CD8-positive, alpha-beta T cell (primary cell): ENCODE measurements at regions of chr19 and their contacts with region 1.

Region 1: DNA sequence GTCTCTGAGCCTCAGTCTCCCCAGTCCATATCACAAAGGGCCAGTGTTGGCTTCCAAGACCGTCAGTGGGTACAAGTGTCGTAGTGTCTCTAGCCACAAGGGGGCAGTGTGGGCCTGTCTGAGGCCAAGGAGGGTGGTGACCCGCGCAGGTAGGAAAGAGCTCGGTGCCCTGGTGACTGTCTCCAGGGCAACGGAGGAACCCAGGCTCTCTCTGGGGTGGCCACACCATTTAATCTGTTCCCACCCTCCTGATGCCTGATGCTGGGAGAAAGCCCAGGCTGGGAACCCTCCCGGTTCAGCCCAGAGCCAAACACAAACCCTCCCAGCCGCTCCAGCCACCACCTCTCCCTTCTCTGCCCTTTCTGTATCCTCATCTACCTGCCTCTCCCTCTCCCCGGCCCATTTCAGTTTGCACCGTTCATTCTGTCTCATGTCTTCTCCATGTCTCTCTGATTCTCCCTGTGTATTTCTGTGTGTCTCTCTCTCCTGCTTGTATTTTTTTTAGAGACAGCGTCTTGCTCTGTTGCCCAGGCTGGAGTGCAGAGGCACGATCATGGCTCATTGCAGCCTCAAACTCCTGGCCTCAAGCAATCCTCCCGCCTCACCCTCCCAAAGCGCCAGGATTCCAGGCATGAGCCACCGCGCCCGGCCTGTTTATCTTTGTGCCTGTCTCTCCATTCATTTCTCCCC is 17.5 kb upstream of the MEIS3 start:
- DNase-seq: peak; percentile 66 to 92 (median 85)
- ATAC-seq: peak; percentile 96
- H3K4me3 ChIP-seq: no peak overlapping the region
- H3K4me3 Mint-ChIP-seq: no peak overlapping the region
- H3K27ac ChIP-seq: no peak overlapping the region
- H3K27ac Mint-ChIP-seq: no peak overlapping the region
- H3K4me1 ChIP-seq: no peaks in the 10 kb centered on the region
- H3K4me1 Mint-ChIP-seq: peaks cover 11% of the 10 kb centered on the region
- H3K27me3 ChIP-seq: peaks cover 7 to 18% of the 10 kb centered on the region in 2 experiments
- H3K27me3 Mint-ChIP-seq: peaks cover 60% of the 10 kb centered on the region
- CTCF ChIP-seq: peak; percentile 86

Region 2: GRCh38 chr19:47381653-47382279 is 55.1 kb before region 1 on chr19:
- CTCF ChIA-PET with region 1: no interaction called
- POLR2A ChIA-PET with region 1: no interaction called
- intact Hi-C with region 1: no loop called
- DNase-seq: peak in 7 of 9 experiments; percentile 12 to 73 (median 38)
- ATAC-seq: peak; percentile 68
- H3K4me3 ChIP-seq: no peak overlapping the region
- H3K4me3 Mint-ChIP-seq: no peak overlapping the region
- H3K27ac ChIP-seq: peak overlapping the region; percentile 19 to 42
- H3K27ac Mint-ChIP-seq: peak overlapping the region; percentile 77
- H3K4me1 ChIP-seq: peaks cover 17% of the 10 kb centered on the region
- H3K4me1 Mint-ChIP-seq: peaks cover 25% of the 10 kb centered on the region
- H3K27me3 ChIP-seq: no peaks in the 10 kb centered on the region
- H3K27me3 Mint-ChIP-seq: no peaks in the 10 kb centered on the region
- CTCF ChIP-seq: no peak

Region 3: DNA sequence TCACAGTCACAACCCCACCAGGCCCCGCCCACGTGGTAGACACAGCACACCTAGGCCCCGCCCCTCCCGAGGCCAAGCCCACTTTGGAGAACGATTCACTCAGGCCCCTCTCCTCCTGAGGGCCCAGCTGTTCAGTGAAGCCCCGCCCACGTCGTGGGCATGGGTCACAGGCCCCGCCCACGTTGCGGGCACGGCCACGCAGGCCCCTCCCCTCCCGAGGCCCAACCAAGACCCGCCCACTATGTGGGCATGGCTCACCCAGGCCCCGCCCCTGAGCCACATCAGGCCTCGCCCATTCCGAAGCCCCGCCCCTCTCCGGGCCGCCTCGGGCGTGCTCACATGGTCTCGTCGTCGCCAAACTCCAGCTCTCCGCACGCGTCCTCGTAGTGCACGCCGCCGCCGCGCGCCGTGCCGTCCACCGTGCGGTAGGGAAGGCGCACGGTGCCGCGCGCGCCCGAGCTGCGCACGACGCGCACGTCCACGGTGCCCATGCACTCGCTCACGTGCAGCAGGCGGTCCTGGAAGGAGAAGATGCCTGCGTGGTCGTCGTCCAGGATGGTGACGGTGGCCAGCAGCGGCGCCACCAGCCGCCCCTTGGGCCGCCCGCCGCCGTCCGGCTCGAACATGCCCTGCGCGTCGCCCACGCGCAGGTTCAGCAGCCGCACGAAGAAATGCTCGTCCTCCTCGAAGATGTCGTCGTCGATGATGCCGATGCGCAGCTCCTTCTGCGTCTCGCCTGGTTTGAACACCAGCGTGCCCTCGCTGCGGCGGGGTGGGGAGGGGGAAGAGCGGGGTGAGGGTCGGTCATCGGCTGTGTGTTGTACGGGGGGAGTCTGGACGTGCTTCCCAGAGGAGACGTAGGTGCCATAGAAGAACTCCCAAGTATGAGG is 10.9 kb after region 1 on chr19:
- CTCF ChIA-PET with region 1: interaction called, 16 read pairs
- POLR2A ChIA-PET with region 1: no interaction called
- intact Hi-C with region 1: loop called in 1 of 2 experiments (anchors 1 kb)
- DNase-seq: peak in 8 of 9 experiments; percentile 26 to 72 (median 53)
- ATAC-seq: peak; percentile 66
- H3K4me3 ChIP-seq: peak overlapping the region in 1 of 2 experiments; percentile 40
- H3K4me3 Mint-ChIP-seq: peak overlapping the region; percentile 42
- H3K27ac ChIP-seq: no peak overlapping the region
- H3K27ac Mint-ChIP-seq: no peak overlapping the region
- H3K4me1 ChIP-seq: peaks cover 45% of the 10 kb centered on the region
- H3K4me1 Mint-ChIP-seq: peaks cover 48% of the 10 kb centered on the region
- H3K27me3 ChIP-seq: peaks cover 8 to 29% of the 10 kb centered on the region in 2 experiments
- H3K27me3 Mint-ChIP-seq: peaks cover 58% of the 10 kb centered on the region
- CTCF ChIP-seq: no peak

Region 4: DNA sequence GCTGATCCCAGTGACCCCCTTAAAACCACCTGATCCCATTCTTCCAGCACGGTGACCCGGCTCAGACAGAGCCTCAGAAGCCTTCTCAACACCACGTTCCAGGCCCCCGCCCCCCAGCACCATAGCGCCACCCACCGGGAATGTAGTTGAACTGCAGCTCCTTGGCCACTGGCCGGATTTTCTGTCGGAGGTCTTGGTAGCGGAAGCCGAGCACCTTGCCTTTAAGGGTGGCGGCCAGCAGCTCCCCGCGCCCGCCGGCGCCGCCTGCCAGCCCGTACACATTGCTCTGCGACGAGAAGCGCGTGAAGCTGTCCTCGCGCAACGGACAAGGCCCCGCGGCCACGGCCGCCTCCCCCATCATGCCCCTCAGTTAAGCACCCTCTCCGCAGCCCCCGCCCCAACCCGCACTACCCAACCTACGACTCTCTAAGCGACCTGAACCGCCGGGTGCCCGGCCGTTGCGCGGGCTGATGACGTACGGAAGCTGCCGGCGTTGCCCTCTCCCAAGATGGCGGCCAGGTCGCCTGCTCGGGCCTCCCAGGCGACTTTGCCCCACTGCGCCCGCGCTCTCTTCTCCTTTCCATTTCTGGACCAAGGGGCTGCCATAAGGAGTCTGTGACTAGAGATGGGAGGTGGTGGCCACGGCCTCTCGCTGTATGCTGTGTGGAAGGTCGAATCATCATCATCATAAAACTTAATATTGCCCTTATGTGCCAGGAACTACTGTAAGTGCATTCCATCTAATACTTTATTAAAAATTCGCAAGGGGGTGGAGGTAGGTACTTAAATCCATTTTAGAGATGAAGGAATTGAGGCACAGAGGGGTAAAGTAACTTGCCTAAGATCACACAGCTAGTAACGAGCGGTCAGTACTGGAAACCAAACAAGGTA is 47.2 kb after region 1 on chr19 and contains the start of gene KPTN:
- CTCF ChIA-PET with region 1: interaction called, 5 read pairs
- POLR2A ChIA-PET with region 1: no interaction called
- intact Hi-C with region 1: loop called (anchors 2 to 5 kb)
- DNase-seq: peak; percentile 76 to 94 (median 87)
- ATAC-seq: peak; percentile 81
- H3K4me3 ChIP-seq: peak within 1 kb of the TSS; percentile 72 to 74
- H3K4me3 Mint-ChIP-seq: peak within 1 kb of the TSS; percentile 98
- H3K27ac ChIP-seq: peak within 1 kb of the TSS; percentile 75 to 94
- H3K27ac Mint-ChIP-seq: peak within 1 kb of the TSS; percentile 98
- H3K4me1 ChIP-seq: peaks cover 38% of the 10 kb centered on the region
- H3K4me1 Mint-ChIP-seq: peaks cover 45% of the 10 kb centered on the region
- H3K27me3 ChIP-seq: no peaks in the 10 kb centered on the region
- H3K27me3 Mint-ChIP-seq: no peaks in the 10 kb centered on the region
- CTCF ChIP-seq: peak; percentile 69
- total RNA-seq, gene KPTN: 5.4 to 5.9 TPM

Region 5: DNA sequence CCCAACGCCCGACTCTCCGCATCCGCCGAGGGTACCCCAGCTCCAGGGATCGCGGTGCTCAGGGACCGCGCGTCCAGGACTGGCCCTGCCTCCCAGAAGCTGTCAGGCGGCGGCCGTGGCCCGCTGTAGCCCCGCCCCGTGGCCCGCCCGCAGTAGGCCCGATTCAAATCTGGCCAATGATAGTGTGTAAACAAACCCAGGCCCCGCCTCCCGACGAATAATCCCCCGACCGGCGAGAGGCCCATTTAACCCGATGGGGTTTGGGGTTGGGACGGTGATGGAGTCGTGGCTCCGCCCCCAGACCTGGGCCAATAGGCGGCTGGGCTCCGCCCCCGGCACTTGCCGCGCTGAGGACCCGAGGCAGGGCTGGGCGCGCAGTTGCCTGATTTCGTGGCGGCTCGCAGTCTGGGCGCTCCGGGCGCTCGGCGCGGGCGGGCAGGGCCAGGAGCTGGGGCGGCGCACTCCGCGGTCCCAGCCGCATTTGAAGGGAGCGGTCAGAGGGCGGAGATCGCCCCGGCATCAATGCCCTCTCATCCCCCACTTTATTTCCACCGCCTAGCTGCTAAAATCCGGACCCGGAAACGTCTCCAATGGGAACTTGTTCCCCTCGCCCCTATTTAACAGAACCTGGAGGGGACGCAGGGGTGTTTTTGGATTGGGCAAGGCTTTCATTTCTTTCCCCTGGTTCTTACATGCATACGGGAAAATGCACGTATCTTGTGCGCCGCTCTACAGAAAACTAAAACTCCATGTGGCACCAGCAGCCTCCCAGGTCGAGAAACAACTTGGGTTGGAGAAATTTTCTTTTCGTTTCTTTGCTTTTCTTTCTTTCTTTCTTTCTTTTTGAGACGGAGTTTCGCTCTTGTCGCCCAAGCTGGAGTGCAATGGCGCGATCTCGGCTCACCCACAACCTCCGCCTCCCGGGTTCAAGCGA is 163.7 kb after region 1 on chr19:
- CTCF ChIA-PET with region 1: interaction called, 3 read pairs
- POLR2A ChIA-PET with region 1: no interaction called
- intact Hi-C with region 1: loop called in 1 of 2 experiments (anchors 5 kb)
- DNase-seq: peak; percentile 99 to 100 (median 100)
- ATAC-seq: peak; percentile 97
- H3K4me3 ChIP-seq: peak overlapping the region; percentile 77 to 93
- H3K4me3 Mint-ChIP-seq: peak overlapping the region; percentile 82
- H3K27ac ChIP-seq: peak overlapping the region; percentile 80 to 83
- H3K27ac Mint-ChIP-seq: peak overlapping the region; percentile 81
- H3K4me1 ChIP-seq: peaks cover 10% of the 10 kb centered on the region
- H3K4me1 Mint-ChIP-seq: peaks cover 26% of the 10 kb centered on the region
- H3K27me3 ChIP-seq: no peaks in the 10 kb centered on the region
- H3K27me3 Mint-ChIP-seq: no peaks in the 10 kb centered on the region
- CTCF ChIP-seq: no peak

Region 6: GRCh38 chr19:47687906-47688305 is 251.0 kb after region 1 on chr19:
- CTCF ChIA-PET with region 1: interaction called, 20 read pairs
- POLR2A ChIA-PET with region 1: no interaction called
- intact Hi-C with region 1: no loop called
- DNase-seq: no peak
- ATAC-seq: no peak
- H3K4me3 ChIP-seq: no peak overlapping the region
- H3K4me3 Mint-ChIP-seq: no peak overlapping the region
- H3K27ac ChIP-seq: no peak overlapping the region
- H3K27ac Mint-ChIP-seq: peak overlapping the region; percentile 41
- H3K4me1 ChIP-seq: no peaks in the 10 kb centered on the region
- H3K4me1 Mint-ChIP-seq: no peaks in the 10 kb centered on the region
- H3K27me3 ChIP-seq: no peaks in the 10 kb centered on the region
- H3K27me3 Mint-ChIP-seq: no peaks in the 10 kb centered on the region
- CTCF ChIP-seq: no peak

Region 7: DNA sequence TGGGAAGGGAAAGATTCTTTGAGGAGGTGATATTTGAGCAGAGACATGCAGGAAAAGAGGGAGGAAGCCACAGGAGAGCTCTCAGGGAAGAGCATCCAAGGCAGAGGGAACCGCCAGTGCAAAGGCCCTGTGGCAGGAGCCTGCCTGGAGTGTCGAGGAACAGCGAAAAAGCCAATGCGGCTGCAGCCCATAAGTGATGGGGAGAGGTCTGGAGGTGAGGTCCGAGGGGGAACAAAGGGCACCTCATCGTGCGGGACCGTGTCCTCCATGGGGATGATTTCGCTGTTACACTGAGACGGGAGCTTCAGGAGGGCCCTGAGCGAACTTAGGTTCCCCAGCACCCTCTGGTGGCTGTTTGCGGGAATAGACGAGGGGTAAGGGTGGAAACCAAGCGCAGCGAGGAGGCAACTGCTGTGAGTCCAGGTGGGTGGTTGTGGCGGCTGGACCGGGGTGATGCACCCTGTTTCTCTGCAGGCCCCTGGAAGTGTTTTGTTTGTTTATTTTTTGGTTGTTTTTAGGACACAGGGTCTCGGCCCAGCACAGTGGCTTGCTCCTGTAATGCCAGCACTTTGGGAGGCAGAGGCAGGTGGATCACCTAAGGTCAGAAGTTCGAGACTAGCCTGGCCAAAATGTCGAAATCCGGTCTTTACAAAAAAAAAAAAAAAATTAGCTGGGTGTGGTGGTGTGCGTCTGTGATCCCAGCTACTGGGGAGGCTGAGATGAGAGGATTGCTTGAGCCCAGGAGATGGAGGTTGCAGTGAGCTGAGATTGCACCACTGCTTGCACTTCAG is 270.5 kb after region 1 on chr19:
- CTCF ChIA-PET with region 1: interaction called, 423 read pairs
- POLR2A ChIA-PET with region 1: interaction called, 8 read pairs
- intact Hi-C with region 1: loop called (anchors 1 kb)
- DNase-seq: peak; percentile 49 to 83 (median 74)
- ATAC-seq: peak; percentile 94
- H3K4me3 ChIP-seq: no peak overlapping the region
- H3K4me3 Mint-ChIP-seq: no peak overlapping the region
- H3K27ac ChIP-seq: no peak overlapping the region
- H3K27ac Mint-ChIP-seq: no peak overlapping the region
- H3K4me1 ChIP-seq: no peaks in the 10 kb centered on the region
- H3K4me1 Mint-ChIP-seq: peaks cover 2% of the 10 kb centered on the region
- H3K27me3 ChIP-seq: peaks cover 4 to 7% of the 10 kb centered on the region in 2 experiments
- H3K27me3 Mint-ChIP-seq: peaks cover 16% of the 10 kb centered on the region
- CTCF ChIP-seq: peak; percentile 72